Spleen (tissue), 13 donors: ENCODE measurements at regions of chr13 and their contacts with region 1.

Region 1: DNA sequence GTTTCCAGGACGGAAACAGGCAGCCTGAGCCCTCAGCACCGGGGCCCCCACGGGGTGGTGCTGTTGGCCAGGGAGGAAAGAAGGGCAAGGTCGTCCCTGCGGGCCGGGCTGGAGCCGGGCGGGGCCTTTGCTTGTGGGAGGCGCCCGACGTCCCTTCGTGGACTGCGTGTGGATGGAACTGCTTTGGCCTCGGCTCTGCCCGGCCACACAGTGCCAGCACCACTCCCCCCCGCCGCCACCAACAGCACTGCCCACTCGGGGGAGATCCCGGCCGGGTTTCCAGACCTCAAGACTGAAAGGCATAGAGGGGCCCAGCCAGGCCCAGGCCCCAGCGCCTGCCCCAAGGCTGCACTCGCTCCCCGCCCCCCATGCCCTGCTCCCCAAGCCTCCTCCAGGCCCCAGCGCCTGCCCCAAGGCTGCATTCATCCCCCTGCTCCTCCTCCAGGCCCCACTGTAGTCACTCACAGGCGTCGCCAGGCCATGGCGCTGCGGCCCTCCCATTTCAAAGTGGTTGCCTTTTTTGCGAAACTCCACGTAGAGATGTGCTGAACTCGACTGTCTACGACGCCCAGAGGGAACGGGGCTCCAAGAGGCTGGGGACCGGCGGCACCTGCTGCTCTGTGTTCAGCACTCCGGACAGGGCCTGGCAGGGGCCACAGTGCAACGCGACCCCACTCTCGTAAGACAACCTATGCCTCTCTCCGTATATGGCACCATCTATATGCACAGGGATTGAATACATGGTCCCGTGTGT is 22.5 kb downstream of the C13orf46 start:
- DNase-seq: peak; percentile 93
- H3K4me3 ChIP-seq: peak overlapping the region in 2 of 8 donors; percentile 4 to 43
- H3K27ac ChIP-seq: peak overlapping the region in 2 of 8 donors; percentile 30 to 38
- H3K4me1 ChIP-seq: peaks cover 5 to 23% (median 14%) of the 10 kb centered on the region in 6 donors
- H3K27me3 ChIP-seq: no peaks in the 10 kb centered on the region
- CTCF ChIP-seq: peak; percentile 75 to 93 (median 86)
- POLR2A ChIP-seq: no peak

Region 2: DNA sequence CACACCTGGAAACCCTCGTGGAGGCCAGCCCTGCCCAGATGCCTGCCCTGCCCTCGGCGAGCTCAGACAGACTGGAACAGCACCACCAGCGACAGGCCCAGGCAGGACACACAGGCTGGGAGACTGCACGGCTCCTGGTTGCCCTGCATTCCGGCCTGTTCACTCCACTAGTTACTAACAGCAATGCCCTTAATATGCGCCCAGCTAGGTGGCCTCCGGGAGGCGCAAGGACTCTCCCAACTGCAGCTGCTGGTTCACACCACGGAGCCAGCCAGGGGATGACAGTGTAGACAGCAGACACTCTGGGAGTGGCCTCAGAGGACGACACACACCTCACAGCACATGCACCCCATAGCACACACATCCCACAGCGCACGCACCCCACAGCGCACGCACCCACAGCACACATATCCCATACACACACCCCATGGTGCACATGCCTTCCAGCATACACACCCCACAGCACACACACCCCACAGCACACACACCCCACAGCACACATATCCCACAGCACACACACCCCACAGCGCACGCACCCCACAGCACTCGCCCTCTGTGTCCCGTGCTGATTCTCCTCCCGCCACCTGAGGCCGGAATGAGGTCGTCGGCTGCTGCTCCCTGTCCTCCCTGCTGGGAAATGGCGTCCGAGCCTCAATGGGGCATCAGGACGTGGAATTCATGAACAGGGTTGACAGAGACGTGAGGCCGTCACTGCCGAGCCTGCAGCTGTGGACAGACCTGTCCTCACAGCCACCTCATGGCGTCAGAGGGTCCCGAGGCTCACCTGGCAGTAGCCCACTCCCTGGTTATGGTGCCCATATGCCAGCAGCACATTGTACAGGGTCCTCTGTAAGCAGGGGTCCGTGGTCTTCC is 601.1 kb before region 1 on chr13:
- intact Hi-C with region 1: no loop called
- DNase-seq: peak; percentile 46
- H3K4me3 ChIP-seq: no peak overlapping the region
- H3K27ac ChIP-seq: peak overlapping the region in 1 of 8 donors; percentile 64
- H3K4me1 ChIP-seq: peaks cover 0 to 11% (median 4%) of the 10 kb centered on the region in 6 donors
- H3K27me3 ChIP-seq: peaks cover 0 to 9% (median 0%) of the 10 kb centered on the region in 7 donors
- CTCF ChIP-seq: no peak
- POLR2A ChIP-seq: no peak

Region 3: GRCh38 chr13:113410472-113411201 is 540.8 kb before region 1 on chr13:
- intact Hi-C with region 1: no loop called
- DNase-seq: peak; percentile 59
- H3K4me3 ChIP-seq: no peak overlapping the region
- H3K27ac ChIP-seq: no peak overlapping the region
- H3K4me1 ChIP-seq: peaks cover 0 to 55% (median 18%) of the 10 kb centered on the region in 6 donors
- H3K27me3 ChIP-seq: peaks cover 0 to 15% (median 0%) of the 10 kb centered on the region in 7 donors
- CTCF ChIP-seq: no peak
- POLR2A ChIP-seq: no peak

Region 4: GRCh38 chr13:114226699-114227323 is 275.4 kb after region 1 on chr13:
- intact Hi-C with region 1: loop called (anchors 2 kb)
- DNase-seq: peak; percentile 93
- H3K4me3 ChIP-seq: no peak overlapping the region
- H3K27ac ChIP-seq: peak overlapping the region in 1 of 8 donors; percentile 39
- H3K4me1 ChIP-seq: peaks cover 0 to 38% (median 19%) of the 10 kb centered on the region in 6 donors
- H3K27me3 ChIP-seq: peaks cover 0 to 32% (median 9%) of the 10 kb centered on the region in 7 donors
- CTCF ChIP-seq: peak; percentile 84 to 98 (median 93)
- POLR2A ChIP-seq: no peak